Activated CD4-positive, alpha-beta T cell treated with anti-CD3 and anti-CD28 coated beads for 36 hours (primary cell): ENCODE measurements at regions of chr17 and their contacts with region 1.

Region 1: DNA sequence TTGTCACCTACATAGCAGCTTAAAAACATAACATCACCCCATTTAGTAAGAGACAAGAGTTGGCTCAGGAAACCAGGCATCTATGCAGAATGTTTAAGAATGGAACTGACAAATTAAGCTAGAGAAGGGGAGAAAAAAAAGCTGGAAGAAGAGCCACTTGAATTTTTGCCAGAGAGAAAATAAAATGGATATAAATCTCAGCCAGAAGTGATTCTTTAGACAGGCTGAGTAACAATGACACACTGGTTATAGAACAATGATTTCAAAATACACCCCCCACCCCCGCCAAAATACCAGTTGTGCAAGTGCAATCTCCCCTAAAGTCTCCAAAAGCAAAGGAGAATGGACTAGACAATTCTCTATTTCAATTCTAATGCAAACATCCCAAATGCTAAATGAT is 22.4 kb downstream of the LSM12 start:
- DNase-seq: no peak
- ATAC-seq: no peak
- H3K4me3 Mint-ChIP-seq: no peak overlapping the region
- H3K27ac Mint-ChIP-seq: no peak overlapping the region
- H3K4me1 Mint-ChIP-seq: peaks cover 9% of the 10 kb centered on the region
- H3K27me3 Mint-ChIP-seq: no peaks in the 10 kb centered on the region

Region 2: DNA sequence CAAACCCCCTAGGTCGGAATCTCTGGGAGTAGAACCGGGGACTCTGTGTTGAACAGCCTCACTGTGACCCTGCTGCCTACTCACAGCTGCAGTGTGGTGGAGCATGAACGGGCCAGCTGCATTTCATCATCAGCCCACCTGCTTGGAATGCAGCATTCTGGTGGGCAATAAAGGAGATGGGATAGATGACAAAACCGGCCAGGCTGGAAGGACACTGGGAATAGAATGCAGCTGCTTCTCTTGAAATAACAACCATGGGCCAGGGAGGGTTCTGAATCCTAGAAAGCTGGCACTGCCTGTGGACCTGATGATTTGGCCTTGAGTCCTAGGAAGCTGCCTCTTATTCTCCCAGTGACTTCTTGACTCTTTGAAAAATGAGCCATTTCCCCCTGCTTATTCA is 240.3 kb before region 1 on chr17:
- CTCF ChIA-PET with region 1: no interaction called
- POLR2A ChIA-PET with region 1: no interaction called
- intact Hi-C with region 1: no loop called
- DNase-seq: no peak
- ATAC-seq: no peak
- H3K4me3 Mint-ChIP-seq: no peak overlapping the region
- H3K27ac Mint-ChIP-seq: no peak overlapping the region
- H3K4me1 Mint-ChIP-seq: no peaks in the 10 kb centered on the region
- H3K27me3 Mint-ChIP-seq: peaks cover 9% of the 10 kb centered on the region

Region 3: GRCh38 chr17:43946069-43946696 is 97.9 kb before region 1 on chr17:
- CTCF ChIA-PET with region 1: interaction called, 25 read pairs
- POLR2A ChIA-PET with region 1: no interaction called
- intact Hi-C with region 1: loop called (anchors 1 kb)
- DNase-seq: peak; percentile 33
- ATAC-seq: no peak
- H3K4me3 Mint-ChIP-seq: no peak overlapping the region
- H3K27ac Mint-ChIP-seq: no peak overlapping the region
- H3K4me1 Mint-ChIP-seq: peaks cover 6% of the 10 kb centered on the region
- H3K27me3 Mint-ChIP-seq: peaks cover 13% of the 10 kb centered on the region

Region 4: DNA sequence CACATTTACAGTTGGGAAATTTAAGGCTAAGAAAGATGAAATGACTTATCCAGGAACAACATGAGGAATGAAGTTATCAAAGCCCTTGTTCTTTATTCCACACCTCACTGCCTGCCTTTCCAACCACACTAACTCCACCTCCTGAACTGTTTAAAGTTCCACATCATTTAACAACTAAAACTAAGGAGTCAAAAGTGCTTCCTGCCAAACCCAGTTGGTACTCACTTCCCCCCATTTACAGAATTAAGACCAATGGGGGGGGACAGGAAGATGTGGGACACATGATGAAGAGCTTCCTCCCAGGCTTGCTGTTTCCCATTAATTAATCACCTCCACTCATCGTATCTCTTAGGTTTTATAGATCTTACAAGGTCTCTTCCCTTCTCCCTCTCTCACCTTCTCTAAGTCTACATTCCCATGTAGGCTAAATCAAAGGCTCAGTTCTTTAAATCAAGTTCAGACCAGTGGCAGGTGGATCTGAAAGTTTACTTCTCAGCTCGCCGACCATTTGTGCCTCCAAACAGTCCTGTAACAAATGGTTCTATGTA is 10.1 kb before region 1 on chr17:
- CTCF ChIA-PET with region 1: interaction called, 11 read pairs
- POLR2A ChIA-PET with region 1: no interaction called
- intact Hi-C with region 1: no loop called
- DNase-seq: no peak
- ATAC-seq: no peak
- H3K4me3 Mint-ChIP-seq: no peak overlapping the region
- H3K27ac Mint-ChIP-seq: no peak overlapping the region
- H3K4me1 Mint-ChIP-seq: peaks cover 5% of the 10 kb centered on the region
- H3K27me3 Mint-ChIP-seq: no peaks in the 10 kb centered on the region

Region 5: DNA sequence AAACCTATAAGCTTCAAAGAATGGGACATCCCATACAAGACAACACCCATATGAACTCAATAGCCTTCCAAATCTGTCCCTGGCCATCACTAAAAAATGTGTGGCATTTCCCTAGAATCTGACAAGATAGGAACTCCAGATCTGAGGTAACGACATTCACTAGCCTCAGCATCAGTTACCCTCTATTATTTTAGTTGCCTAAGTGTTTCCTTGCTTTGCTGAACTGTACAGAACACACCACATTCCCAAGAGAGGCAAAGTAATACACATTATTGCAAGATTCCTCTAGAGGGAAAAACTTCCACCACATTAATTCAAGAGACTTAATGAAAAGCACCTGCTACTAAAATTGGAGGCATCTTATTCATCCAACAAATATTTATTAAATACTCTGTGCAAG is 17.4 kb after region 1 on chr17:
- CTCF ChIA-PET with region 1: interaction called, 17 read pairs
- POLR2A ChIA-PET with region 1: no interaction called
- intact Hi-C with region 1: no loop called
- DNase-seq: no peak
- ATAC-seq: no peak
- H3K4me3 Mint-ChIP-seq: no peak overlapping the region
- H3K27ac Mint-ChIP-seq: no peak overlapping the region
- H3K4me1 Mint-ChIP-seq: peaks cover 49% of the 10 kb centered on the region
- H3K27me3 Mint-ChIP-seq: no peaks in the 10 kb centered on the region

Region 6: GRCh38 chr17:44210342-44211192 is 166.5 kb after region 1 on chr17:
- CTCF ChIA-PET with region 1: no interaction called
- POLR2A ChIA-PET with region 1: no interaction called
- intact Hi-C with region 1: no loop called
- DNase-seq: peak; percentile 96
- ATAC-seq: peak; percentile 84
- H3K4me3 Mint-ChIP-seq: peak overlapping the region; percentile 79
- H3K27ac Mint-ChIP-seq: peak overlapping the region; percentile 98
- H3K4me1 Mint-ChIP-seq: peaks cover 60% of the 10 kb centered on the region
- H3K27me3 Mint-ChIP-seq: no peaks in the 10 kb centered on the region